Heart right ventricle (tissue), 16 donors: ENCODE measurements at regions of chr3 and their contacts with region 1.

Region 1: DNA sequence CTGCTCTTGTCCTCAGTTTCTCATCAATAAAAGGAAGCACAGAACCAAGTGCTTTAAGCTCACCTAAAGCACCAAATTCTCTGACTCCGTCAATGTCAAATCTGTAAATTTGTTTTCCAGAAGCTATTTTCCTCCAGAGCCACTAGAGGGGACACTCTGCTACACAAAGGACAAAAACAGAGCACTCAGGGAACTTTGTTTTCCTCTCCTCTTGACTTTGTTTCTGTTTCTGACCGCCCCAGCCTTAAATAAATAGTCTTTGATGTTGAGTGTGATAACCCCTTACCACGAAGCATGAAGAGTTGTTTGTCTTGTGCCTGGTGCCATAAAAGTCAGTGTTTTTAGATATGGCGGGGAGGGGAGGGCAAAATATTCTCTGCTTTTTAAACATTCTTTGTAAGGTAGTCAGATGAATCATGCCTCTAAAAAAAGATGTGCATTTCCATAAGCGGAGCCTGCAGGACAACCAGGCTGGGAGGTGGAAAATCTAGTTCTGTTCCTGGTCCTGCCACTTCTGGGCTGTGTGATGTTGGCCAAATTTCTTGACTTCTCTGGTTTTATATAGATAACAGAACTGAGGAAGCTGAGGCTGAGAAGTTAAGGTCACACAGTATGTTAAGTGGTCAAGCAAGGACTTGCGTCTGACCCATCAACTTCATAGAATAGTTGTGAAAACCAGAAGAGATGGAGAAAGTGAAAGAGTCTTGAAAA is 7.3 kb upstream of the ZBTB38 start:
- DNase-seq: peak in 1 of 2 donors; percentile 46
- ATAC-seq: peak; percentile 67 to 89 (median 86)
- H3K4me3 ChIP-seq: peak overlapping the region in 6 of 10 donors; percentile 7 to 37 (median 26)
- H3K27ac ChIP-seq: peak overlapping the region in 6 of 10 donors; percentile 2 to 61 (median 44)
- H3K4me1 ChIP-seq: peaks cover 0 to 16% (median 5%) of the 10 kb centered on the region in 9 donors
- H3K27me3 ChIP-seq: no peaks in the 10 kb centered on the region
- CTCF ChIP-seq: peak; percentile 66 to 93 (median 78)

Region 2: DNA sequence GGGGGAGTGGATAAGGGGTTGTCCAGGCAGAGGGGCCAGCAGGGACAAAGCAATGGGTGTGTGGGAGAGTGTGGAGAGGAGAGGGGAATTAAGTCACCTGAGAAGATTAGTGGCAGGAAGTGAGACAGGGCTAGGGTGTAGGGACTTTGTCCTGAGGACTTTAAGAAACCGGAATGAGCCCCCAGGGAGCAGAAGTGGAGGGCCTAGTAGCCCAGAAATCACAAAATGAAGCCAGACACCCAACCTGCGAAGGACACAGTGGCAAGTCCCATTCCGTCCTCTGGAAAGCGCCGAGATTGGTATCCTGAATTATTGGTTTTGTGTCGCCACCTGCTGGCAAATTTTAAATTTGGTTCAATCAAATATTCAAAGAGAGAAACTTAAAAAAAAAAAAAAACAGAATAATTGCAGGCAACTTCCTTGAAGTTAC is 497.4 kb before region 1 on chr3:
- intact Hi-C with region 1: no loop called
- DNase-seq: peak in 1 of 2 donors; percentile 58
- ATAC-seq: peak in 7 of 8 donors; percentile 16 to 56 (median 37)
- H3K4me3 ChIP-seq: no peak overlapping the region
- H3K27ac ChIP-seq: no peak overlapping the region
- H3K4me1 ChIP-seq: no peaks in the 10 kb centered on the region
- H3K27me3 ChIP-seq: no peaks in the 10 kb centered on the region
- CTCF ChIP-seq: peak in 8 of 9 donors; percentile 20 to 66 (median 56)

Region 3: GRCh38 chr3:141231101-141231935 is 129.7 kb before region 1 on chr3 and contains the start of gene PXYLP1:
- intact Hi-C with region 1: loop called in 1 of 10 experiments (anchors 10 kb)
- DNase-seq: peak; percentile 93 to 96
- ATAC-seq: peak; percentile 94 to 98 (median 96)
- H3K4me3 ChIP-seq: peak within 1 kb of the TSS; percentile 83 to 97 (median 88)
- H3K27ac ChIP-seq: peak within 1 kb of the TSS; percentile 56 to 95 (median 92)
- H3K4me1 ChIP-seq: peaks cover 2 to 34% (median 20%) of the 10 kb centered on the region in 9 donors
- H3K27me3 ChIP-seq: no peaks in the 10 kb centered on the region
- CTCF ChIP-seq: peak; percentile 56 to 92 (median 75)
- total RNA-seq, gene PXYLP1: 8.7 to 33.5 (median 19.9) TPM

Region 4: GRCh38 chr3:141311496-141312353 is 49.3 kb before region 1 on chr3:
- intact Hi-C with region 1: loop called in 5 of 10 experiments (anchors 2 to 5 kb)
- DNase-seq: peak; percentile 98 to 99
- ATAC-seq: peak; percentile 97 to 100 (median 99)
- H3K4me3 ChIP-seq: peak overlapping the region; percentile 42 to 79 (median 72)
- H3K27ac ChIP-seq: peak overlapping the region; percentile 19 to 89 (median 86)
- H3K4me1 ChIP-seq: peaks cover 4 to 26% (median 16%) of the 10 kb centered on the region in 9 donors
- H3K27me3 ChIP-seq: no peaks in the 10 kb centered on the region
- CTCF ChIP-seq: peak; percentile 57 to 93 (median 80)

Region 5: DNA sequence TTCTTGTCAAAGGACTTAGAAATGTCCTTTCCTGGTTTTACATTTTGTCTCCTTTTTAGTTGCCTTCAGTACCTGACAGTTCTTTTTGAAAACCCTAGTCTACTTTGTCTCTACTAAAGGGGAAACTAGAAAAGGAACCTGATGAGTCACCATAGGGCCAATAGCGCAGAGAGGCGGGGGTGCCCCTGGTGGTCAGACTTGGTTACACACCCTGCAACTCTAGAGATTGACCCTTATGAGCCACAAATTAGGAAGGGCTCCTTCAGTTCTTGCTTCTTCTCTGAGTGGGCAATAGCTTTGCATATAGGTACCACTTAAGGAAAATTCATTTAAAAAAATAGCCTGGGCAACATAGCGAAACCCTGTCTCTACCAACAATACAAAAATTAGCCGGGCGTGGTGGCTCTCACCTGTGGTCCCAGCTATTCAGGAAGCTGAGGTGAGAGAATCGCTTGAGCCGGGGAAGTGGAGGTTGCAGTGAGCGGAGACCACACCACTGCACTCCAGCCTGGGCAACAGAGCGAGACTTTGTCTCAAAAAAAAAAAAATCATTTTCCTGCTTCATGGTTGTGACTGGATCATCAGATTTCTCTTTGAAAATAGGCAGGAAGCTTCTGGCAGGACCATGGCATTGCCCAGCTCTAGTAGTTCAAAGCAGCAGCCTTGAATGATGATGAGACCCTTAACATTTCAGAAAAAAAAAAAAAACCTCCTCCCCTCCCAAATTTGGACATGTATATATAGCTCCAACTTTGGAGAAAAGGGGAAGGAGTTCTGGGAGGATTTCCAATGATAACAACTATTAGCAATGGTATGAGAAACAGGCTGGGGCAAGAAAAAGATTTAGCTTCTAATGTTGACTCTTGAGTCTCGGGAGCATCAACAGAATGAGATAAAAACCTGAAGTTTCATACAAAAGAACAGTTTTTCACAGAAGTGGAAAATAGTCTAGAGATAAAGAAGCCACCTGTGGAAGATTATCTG is 80.6 kb after region 1 on chr3:
- intact Hi-C with region 1: loop called in 5 of 10 experiments (anchors 1 to 5 kb)
- DNase-seq: peak; percentile 62 to 76
- ATAC-seq: peak; percentile 47 to 91 (median 84)
- H3K4me3 ChIP-seq: peak overlapping the region in 3 of 10 donors; percentile 2 to 23 (median 5)
- H3K27ac ChIP-seq: peak overlapping the region; percentile 75 to 92 (median 84)
- H3K4me1 ChIP-seq: peaks cover 11 to 92% (median 73%) of the 10 kb centered on the region in 9 donors
- H3K27me3 ChIP-seq: no peaks in the 10 kb centered on the region
- CTCF ChIP-seq: peak; percentile 54 to 90 (median 85)